ENCODE measurements at regions of chr2 and their contacts with region 1.

Region 1: GRCh38 chr2:231056453-231057424 is at the start of gene PSMD1:
- DNase-seq: peak; percentile 55 to 95
- H3K4me3 ChIP-seq: peak within 1 kb of the TSS; percentile 86 to 89
- H3K27ac ChIP-seq: peak within 1 kb of the TSS; percentile 86 to 95
- H3K4me1 ChIP-seq: peaks cover 6 to 19% of the 10 kb centered on the region in 2 donors
- H3K27me3 ChIP-seq: no peaks in the 10 kb centered on the region
- CTCF ChIP-seq: peak; percentile 89 to 93 (median 91)
- total RNA-seq, gene PSMD1: 97.4 TPM

Region 2: DNA sequence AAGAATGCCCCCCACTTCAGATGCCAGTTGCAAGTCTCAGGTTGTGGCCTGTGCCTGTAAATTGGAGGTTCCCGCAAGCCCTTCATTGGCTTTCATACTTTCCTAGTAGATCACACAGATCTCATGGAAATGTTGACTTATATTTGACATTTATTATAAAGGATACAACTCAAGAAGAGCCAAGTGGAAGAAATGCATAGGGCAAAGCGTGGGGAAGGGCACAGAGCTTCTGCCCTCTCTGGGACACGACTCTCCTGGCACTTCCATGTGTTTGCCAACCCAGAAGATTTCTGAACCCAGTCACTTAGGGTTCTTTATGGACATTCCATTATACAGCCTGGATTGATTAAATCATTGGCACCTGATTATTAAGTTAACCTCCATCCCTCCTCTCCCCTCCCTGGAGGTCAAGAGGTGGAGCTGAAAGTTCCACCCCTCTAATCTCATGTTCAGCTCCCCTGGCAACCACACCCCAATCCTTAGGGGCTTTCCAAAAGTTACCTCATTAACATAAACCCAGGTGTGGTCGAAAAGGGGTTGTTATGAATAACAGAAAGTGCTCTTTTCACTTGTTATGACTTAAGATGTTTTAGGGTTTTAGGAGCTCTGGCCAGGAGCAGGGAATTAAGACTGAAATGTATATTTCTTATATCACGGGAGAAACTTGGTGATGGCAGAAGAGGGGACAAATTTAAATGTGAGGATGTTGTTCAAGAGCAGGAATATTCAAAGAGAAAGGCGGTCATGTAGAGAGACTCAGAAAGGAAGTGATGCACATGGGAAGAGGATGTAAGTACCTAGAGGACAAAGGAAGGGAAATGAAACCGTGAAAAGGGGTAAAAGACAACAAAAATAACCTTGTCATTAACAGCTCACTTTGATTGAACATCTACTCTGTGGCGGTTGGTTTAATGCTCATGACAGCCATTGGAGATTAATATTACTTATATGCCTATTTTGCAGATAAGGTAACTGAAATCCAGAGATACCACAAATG is 609.0 kb before region 1 on chr2:
- intact Hi-C with region 1: no loop called
- DNase-seq: no peak
- H3K4me3 ChIP-seq: no peak overlapping the region
- H3K27ac ChIP-seq: peak overlapping the region in 1 of 2 donors; percentile 2
- H3K4me1 ChIP-seq: peaks cover 0 to 7% of the 10 kb centered on the region in 2 donors
- H3K27me3 ChIP-seq: no peaks in the 10 kb centered on the region
- CTCF ChIP-seq: no peak

Region 3: DNA sequence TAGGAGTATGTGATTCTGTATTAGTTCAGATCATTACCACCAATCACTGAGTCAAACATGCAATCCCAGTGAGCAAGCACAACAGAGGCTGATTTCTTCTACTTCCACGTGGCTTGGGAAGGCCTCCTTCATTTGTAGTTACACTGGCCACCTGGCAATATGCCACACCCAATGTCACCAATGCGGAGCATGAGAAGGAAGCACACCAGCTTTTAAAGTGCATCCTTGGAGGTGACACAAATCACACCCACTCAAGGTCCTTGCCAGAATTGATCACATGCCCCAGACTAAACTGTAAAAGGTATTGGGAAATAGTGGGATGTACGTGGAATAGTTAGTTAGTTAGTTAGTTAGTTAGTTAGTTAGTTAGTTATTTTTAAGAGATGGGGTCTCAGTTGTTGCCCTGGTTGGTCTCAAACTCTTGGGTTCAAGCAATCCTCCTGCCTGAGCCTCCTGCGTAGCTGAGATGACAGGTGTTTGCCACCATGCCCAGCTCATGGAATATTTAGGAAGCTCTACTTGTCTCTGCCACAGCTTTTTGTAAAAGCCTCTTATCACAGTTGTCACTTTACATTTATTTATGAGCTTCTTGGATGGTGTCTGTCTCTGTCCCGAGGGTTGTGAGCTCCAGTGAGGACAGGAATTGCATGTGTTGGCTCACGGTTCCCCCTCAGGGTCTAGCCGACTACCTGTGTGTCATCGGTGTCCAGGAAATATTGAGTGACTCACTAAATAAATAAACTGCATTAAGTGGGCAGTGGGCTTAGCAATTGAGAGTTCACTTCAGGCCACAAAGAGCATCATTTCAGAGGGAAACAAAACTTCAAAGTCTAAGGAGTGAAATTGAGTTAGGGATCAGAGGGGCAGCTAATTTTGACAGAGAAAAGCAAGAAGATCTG is 372.2 kb before region 1 on chr2:
- intact Hi-C with region 1: no loop called
- DNase-seq: no peak
- H3K4me3 ChIP-seq: no peak overlapping the region
- H3K27ac ChIP-seq: no peak overlapping the region
- H3K4me1 ChIP-seq: no peaks in the 10 kb centered on the region
- H3K27me3 ChIP-seq: no peaks in the 10 kb centered on the region
- CTCF ChIP-seq: no peak

Region 4: DNA sequence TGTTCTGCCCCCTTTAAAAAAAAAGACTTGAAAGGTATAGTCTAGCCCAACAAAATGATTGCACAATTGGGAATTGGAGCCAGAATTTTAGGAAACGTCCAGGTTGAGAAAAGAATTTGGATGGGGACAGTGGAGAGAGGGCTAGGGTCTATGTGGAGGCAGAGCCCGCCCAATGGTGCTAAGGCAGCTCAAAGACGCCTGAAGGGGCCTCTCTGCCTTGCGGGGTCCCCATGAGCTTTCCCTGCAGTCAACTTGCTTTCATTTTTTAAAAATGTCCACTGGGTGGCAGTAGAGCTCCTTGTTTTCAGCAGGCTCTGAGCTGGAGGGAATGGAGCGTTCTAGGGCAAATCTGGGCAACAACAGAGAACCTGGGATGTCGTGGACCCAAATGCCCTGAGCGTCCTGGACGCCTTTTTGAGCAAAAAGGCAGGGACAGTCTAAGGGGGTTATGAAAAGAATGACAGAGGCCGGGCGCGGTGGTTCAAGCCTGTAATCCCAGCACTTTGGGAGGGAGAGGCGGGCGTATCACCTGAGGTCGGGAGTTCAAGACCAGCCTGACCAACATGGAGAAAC is 232.2 kb before region 1 on chr2:
- intact Hi-C with region 1: loop called (anchors 1 kb)
- DNase-seq: peak in 1 of 2 donors; percentile 72
- H3K4me3 ChIP-seq: peak overlapping the region; percentile 46 to 58
- H3K27ac ChIP-seq: no peak overlapping the region
- H3K4me1 ChIP-seq: peaks cover 4 to 12% of the 10 kb centered on the region in 2 donors
- H3K27me3 ChIP-seq: no peaks in the 10 kb centered on the region
- CTCF ChIP-seq: peak; percentile 72 to 80 (median 73)

Region 5: DNA sequence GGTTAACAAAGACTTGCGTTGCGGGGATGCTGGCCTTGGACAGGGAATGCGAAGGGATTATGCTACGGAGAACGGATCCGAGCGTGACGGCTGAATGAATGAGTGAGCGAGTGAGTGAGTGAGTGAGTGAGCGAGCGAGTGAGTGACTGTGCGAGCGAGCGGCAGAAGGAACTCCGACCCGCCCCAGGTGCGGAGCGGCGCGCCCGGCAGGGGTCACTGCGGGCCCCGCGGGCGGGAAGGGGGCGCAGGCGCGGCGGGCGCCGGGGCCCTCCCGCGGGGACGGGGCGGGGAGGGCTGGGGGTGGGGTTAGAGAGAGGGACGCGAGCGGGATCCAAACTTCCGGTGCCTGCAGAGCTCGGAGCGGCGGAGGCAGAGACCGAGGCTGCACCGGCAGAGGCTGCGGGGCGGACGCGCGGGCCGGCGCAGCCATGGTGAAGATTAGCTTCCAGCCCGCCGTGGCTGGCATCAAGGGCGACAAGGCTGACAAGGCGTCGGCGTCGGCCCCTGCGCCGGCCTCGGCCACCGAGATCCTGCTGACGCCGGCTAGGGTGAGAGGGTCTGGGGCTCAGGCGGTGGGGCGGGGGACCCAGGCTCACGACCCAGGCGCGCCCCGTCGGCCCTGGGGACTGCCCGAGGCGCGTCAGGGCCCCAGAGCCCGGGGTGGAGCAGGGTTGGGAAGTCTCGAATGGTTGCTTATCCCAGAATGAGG is 192.0 kb before region 1 on chr2 and contains the start of gene ITM2C:
- intact Hi-C with region 1: loop called (anchors 5 kb)
- DNase-seq: peak in 1 of 2 donors; percentile 79
- H3K4me3 ChIP-seq: peak within 1 kb of the TSS; percentile 84 to 96
- H3K27ac ChIP-seq: peak within 1 kb of the TSS; percentile 38 to 57
- H3K4me1 ChIP-seq: peaks cover 3 to 11% of the 10 kb centered on the region in 2 donors
- H3K27me3 ChIP-seq: no peaks in the 10 kb centered on the region
- CTCF ChIP-seq: peak in 2 of 3 experiments; percentile 29 to 32
- total RNA-seq, gene ITM2C: 84.9 TPM

Region 6: GRCh38 chr2:230974096-230974913 is 82.4 kb before region 1 on chr2:
- intact Hi-C with region 1: no loop called
- DNase-seq: no peak
- H3K4me3 ChIP-seq: no peak overlapping the region
- H3K27ac ChIP-seq: no peak overlapping the region
- H3K4me1 ChIP-seq: no peaks in the 10 kb centered on the region
- H3K27me3 ChIP-seq: no peaks in the 10 kb centered on the region
- CTCF ChIP-seq: no peak

Region 7: GRCh38 chr2:231198291-231199173 is 141.8 kb after region 1 on chr2 and contains the start of gene ARMC9:
- intact Hi-C with region 1: loop called (anchors 2 kb)
- DNase-seq: peak in 1 of 2 donors; percentile 83
- H3K4me3 ChIP-seq: peak within 1 kb of the TSS; percentile 71 to 79
- H3K27ac ChIP-seq: peak within 1 kb of the TSS; percentile 71 to 73
- H3K4me1 ChIP-seq: peaks cover 3 to 14% of the 10 kb centered on the region in 2 donors
- H3K27me3 ChIP-seq: no peaks in the 10 kb centered on the region
- CTCF ChIP-seq: no peak
- total RNA-seq, gene ARMC9: 3.3 TPM

Region 8: GRCh38 chr2:231411831-231412617 is 355.3 kb after region 1 on chr2:
- intact Hi-C with region 1: loop called (anchors 5 kb)
- DNase-seq: peak; percentile 53 to 93
- H3K4me3 ChIP-seq: peak overlapping the region; percentile 73 to 92
- H3K27ac ChIP-seq: peak overlapping the region; percentile 8 to 26
- H3K4me1 ChIP-seq: peaks cover 0 to 5% of the 10 kb centered on the region in 2 donors
- H3K27me3 ChIP-seq: no peaks in the 10 kb centered on the region
- CTCF ChIP-seq: peak; percentile 82 to 97 (median 96)

Region 9: GRCh38 chr2:231780909-231781797 is 724.4 kb after region 1 on chr2 and contains the start of gene PDE6D:
- intact Hi-C with region 1: loop called (anchors 5 kb)
- DNase-seq: peak; percentile 96 to 99
- H3K4me3 ChIP-seq: peak within 1 kb of the TSS; percentile 68 to 94
- H3K27ac ChIP-seq: peak within 1 kb of the TSS; percentile 83 to 85
- H3K4me1 ChIP-seq: peaks cover 4 to 29% of the 10 kb centered on the region in 2 donors
- H3K27me3 ChIP-seq: no peaks in the 10 kb centered on the region
- CTCF ChIP-seq: no peak
- total RNA-seq, gene PDE6D: 34.1 TPM